T-cell (primary cell): ENCODE measurements at regions of chr11 and their contacts with region 1.

Region 1: GRCh38 chr11:76577199-76577920 is 93.2 kb downstream of the LRRC32 start:
- DNase-seq: no peak
- ATAC-seq: no peak
- H3K4me3 ChIP-seq: no peak overlapping the region
- H3K4me3 Mint-ChIP-seq: no peak overlapping the region
- H3K27ac ChIP-seq: no peak overlapping the region
- H3K27ac Mint-ChIP-seq: no peak overlapping the region
- H3K4me1 ChIP-seq: no peaks in the 10 kb centered on the region
- H3K4me1 Mint-ChIP-seq: no peaks in the 10 kb centered on the region
- H3K27me3 ChIP-seq: peaks cover 0 to 20% of the 10 kb centered on the region in 2 experiments
- H3K27me3 Mint-ChIP-seq: peaks cover 13 to 18% of the 10 kb centered on the region in 2 donors

Region 2: DNA sequence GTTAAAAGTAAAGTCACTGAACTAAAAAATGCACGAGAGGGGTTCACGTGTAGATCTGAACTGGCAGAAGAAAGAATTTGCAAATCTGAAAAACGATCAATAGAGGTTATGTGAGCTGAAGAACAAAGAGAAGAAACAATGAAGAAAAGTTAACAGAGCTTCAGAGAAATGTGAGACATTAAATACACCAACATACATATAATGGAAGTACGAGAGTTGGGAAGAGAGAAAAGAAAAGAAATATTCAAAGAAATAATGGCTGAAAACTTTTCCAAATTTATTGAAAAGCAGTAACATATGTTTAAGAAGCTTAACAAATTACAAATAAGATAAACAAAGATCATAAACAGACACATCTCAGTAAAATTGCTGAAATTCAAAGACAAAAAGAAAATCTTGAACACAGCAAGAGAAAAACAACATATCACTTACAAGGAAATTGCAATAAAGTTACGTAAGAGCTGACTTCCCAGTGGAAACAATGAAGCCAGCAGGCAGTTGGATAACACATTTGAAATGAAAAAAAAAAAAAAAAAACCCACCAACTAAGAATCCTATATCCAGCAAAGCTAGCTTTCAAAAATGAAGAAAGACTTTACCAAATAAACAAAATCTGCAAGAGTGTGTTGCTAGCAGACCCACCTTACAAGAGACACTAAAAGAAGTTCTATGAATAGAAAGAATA is 75.7 kb before region 1 on chr11:
- CTCF ChIA-PET with region 1: no interaction called
- POLR2A ChIA-PET with region 1: no interaction called
- DNase-seq: no peak
- ATAC-seq: no peak
- H3K4me3 ChIP-seq: no peak overlapping the region
- H3K4me3 Mint-ChIP-seq: no peak overlapping the region
- H3K27ac ChIP-seq: no peak overlapping the region
- H3K27ac Mint-ChIP-seq: no peak overlapping the region
- H3K4me1 ChIP-seq: no peaks in the 10 kb centered on the region
- H3K4me1 Mint-ChIP-seq: peaks cover 0 to 3% (median 3%) of the 10 kb centered on the region in 3 donors
- H3K27me3 ChIP-seq: no peaks in the 10 kb centered on the region
- H3K27me3 Mint-ChIP-seq: no peaks in the 10 kb centered on the region

Region 3: DNA sequence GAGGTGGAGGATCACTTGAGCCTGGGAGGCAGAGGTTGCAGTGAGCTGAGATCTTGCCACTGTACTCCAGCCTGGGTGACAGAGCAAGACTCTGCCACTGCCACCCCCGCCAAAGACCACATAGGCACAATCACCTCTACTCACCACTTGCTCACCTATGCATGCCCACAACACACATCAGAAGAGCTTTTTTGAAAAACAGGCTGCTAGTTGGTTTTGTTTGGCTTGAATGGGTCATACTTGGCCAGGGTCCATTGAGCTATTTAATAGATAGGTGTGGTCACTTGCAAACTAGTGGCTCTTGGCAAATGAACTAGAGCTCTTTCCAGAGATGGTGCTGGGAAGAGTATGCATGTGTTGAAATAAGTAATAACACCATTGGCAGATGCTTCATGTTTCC is 52.4 kb before region 1 on chr11:
- CTCF ChIA-PET with region 1: no interaction called
- POLR2A ChIA-PET with region 1: no interaction called
- DNase-seq: no peak
- ATAC-seq: no peak
- H3K4me3 ChIP-seq: no peak overlapping the region
- H3K4me3 Mint-ChIP-seq: no peak overlapping the region
- H3K27ac ChIP-seq: no peak overlapping the region
- H3K27ac Mint-ChIP-seq: no peak overlapping the region
- H3K4me1 ChIP-seq: no peaks in the 10 kb centered on the region
- H3K4me1 Mint-ChIP-seq: no peaks in the 10 kb centered on the region
- H3K27me3 ChIP-seq: no peaks in the 10 kb centered on the region
- H3K27me3 Mint-ChIP-seq: no peaks in the 10 kb centered on the region

Region 4: GRCh38 chr11:77568916-77569675 is 991.7 kb after region 1 on chr11:
- CTCF ChIA-PET with region 1: no interaction called
- POLR2A ChIA-PET with region 1: interaction called in 1 of 2 experiments, 12 read pairs
- DNase-seq: no peak
- ATAC-seq: no peak
- H3K4me3 ChIP-seq: no peak overlapping the region
- H3K4me3 Mint-ChIP-seq: no peak overlapping the region
- H3K27ac ChIP-seq: no peak overlapping the region
- H3K27ac Mint-ChIP-seq: no peak overlapping the region
- H3K4me1 ChIP-seq: no peaks in the 10 kb centered on the region
- H3K4me1 Mint-ChIP-seq: no peaks in the 10 kb centered on the region
- H3K27me3 ChIP-seq: peaks cover 0 to 11% of the 10 kb centered on the region in 2 experiments
- H3K27me3 Mint-ChIP-seq: peaks cover 21 to 30% of the 10 kb centered on the region in 2 donors